Posterior cingulate gyrus (tissue), 11 donors: ENCODE measurements at regions of chr7 and their contacts with region 1.

Region 1: GRCh38 chr7:133230591-133231194 is 22.2 kb upstream of the EXOC4 start:
- DNase-seq: peak in 4 of 10 donors; percentile 41 to 52 (median 46)

Region 2: GRCh38 chr7:132930881-132931280 is 299.8 kb before region 1 on chr7:
- intact Hi-C with region 1: loop called (anchors 10 kb)
- DNase-seq: peak in 1 of 10 donors; percentile 29

Region 3: DNA sequence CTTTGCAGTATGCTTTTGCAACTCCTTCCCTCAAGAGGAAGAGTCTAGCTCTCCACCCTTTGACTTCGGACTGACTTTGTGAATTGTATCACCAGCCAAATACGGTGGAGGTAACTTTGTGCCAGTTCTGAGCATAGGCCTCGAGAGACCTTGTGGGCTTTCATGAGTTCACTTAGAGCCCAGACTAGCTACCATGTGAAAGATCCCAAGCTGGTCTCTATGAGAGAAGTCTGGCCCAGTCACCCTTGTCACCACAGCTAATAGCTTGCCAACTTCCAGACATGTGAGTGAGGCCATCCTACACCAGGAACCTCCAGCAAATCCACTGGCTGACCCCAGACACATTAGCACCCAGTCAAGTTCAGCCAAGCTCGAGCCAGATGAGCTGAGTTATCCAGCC is 50.0 kb before region 1 on chr7:
- intact Hi-C with region 1: no loop called
- DNase-seq: no peak